ENCODE measurements at regions of chr6 and their contacts with region 1.

Region 1: GRCh38 chr6:34425498-34426410 is at the start of gene RPS10:
- DNase-seq: peak; percentile 95
- ATAC-seq: peak; percentile 95
- H3K4me3 Mint-ChIP-seq: peak within 1 kb of the TSS; percentile 97
- H3K27ac Mint-ChIP-seq: peak within 1 kb of the TSS; percentile 99
- H3K4me1 Mint-ChIP-seq: peaks cover 35% of the 10 kb centered on the region
- H3K27me3 Mint-ChIP-seq: no peaks in the 10 kb centered on the region
- total RNA-seq, gene RPS10: 2,447 to 2,541 TPM

Region 2: GRCh38 chr6:33788694-33789549 is 636.8 kb before region 1 on chr6 and contains the start of gene LEMD2:
- CTCF ChIA-PET with region 1: no interaction called
- POLR2A ChIA-PET with region 1: no interaction called
- intact Hi-C with region 1: loop called in 1 of 2 experiments (anchors 1 kb)
- DNase-seq: peak; percentile 93
- ATAC-seq: peak; percentile 87
- H3K4me3 Mint-ChIP-seq: peak within 1 kb of the TSS; percentile 96
- H3K27ac Mint-ChIP-seq: peak within 1 kb of the TSS; percentile 99
- H3K4me1 Mint-ChIP-seq: peaks cover 47% of the 10 kb centered on the region
- H3K27me3 Mint-ChIP-seq: no peaks in the 10 kb centered on the region
- total RNA-seq, gene LEMD2: 55.2 to 61.5 TPM

Region 3: GRCh38 chr6:33824461-33825154 is 601.1 kb before region 1 on chr6:
- CTCF ChIA-PET with region 1: no interaction called
- POLR2A ChIA-PET with region 1: no interaction called
- intact Hi-C with region 1: no loop called
- DNase-seq: no peak
- ATAC-seq: no peak
- H3K4me3 Mint-ChIP-seq: no peak overlapping the region
- H3K27ac Mint-ChIP-seq: no peak overlapping the region
- H3K4me1 Mint-ChIP-seq: no peaks in the 10 kb centered on the region
- H3K27me3 Mint-ChIP-seq: no peaks in the 10 kb centered on the region

Region 4: DNA sequence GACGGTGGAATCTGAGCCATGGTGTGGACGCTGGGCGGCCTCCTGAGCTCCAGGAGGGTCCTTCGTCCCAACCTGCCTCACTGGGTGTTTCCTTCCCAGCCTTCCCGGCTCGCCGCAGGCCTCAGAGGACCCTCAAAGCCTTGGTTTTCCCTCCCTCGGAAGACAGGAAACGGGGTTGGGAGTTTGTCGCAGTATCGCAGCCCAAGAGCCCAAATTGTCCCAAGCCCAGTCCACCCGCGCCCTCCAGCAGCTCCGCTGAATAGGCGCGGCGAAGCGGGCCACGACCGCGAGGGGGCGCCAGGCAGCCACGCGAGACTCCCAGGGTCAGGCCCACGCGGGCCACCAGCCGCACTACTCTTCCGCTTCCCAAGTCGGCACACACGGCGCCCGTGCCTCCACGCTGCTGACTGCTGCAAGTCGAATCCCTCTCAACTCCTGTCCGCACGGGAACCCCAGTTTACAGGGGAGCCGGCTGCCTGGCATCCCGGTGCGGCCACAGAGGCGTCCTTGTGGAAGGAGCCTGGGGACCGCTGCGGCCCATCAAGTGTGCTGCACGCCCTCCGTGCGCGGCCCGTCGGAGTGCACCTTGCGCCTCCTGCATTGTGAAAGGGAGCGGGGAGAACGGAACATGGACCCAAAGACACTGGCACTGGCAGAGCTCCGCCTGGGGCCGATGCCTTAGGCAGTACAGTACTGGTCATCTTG is 229.5 kb before region 1 on chr6:
- CTCF ChIA-PET with region 1: interaction called, 3 read pairs
- POLR2A ChIA-PET with region 1: interaction called, 3 read pairs
- intact Hi-C with region 1: loop called in 1 of 2 experiments (anchors 2 kb)
- DNase-seq: peak; percentile 93
- ATAC-seq: peak; percentile 94
- H3K4me3 Mint-ChIP-seq: peak overlapping the region; percentile 73
- H3K27ac Mint-ChIP-seq: peak overlapping the region; percentile 80
- H3K4me1 Mint-ChIP-seq: peaks cover 11% of the 10 kb centered on the region
- H3K27me3 Mint-ChIP-seq: no peaks in the 10 kb centered on the region

Region 5: DNA sequence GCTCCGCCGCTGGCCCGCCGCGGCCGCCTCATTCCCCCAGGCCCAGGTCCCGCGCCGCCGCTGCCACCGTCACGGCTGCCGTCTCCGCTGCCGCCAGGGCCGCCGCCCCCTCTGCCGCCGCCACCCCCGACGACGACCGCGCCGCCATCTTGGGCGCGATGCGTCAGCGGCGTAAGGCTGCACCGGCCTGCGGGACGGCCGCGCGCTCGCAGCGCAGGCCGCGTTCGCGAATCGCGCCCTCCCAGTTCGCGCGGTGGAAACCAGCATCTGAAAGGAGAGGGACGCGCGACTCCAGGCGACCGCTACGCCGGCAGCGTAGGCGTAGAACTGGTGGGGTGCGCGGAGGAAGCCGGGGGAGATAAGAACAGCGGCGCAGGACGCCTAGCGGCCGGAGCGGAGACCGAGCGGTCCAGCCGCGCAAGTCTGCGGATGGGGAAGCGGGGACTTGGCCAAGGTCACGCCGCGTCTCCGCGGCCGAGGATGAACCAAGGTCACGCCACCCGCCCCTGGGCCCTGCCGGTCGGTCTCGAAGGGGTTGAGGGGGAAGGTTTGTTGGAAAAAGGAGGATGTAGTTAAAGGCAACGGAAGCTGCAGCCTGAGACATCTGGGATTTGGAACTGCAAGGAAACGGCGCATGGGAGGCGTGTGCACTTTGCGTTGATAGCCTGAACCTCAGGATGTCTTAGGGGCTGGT is 33.1 kb before region 1 on chr6 and contains the start of gene NUDT3:
- CTCF ChIA-PET with region 1: no interaction called
- POLR2A ChIA-PET with region 1: no interaction called
- intact Hi-C with region 1: loop called (anchors 1 to 2 kb)
- DNase-seq: peak; percentile 96
- ATAC-seq: peak; percentile 92
- H3K4me3 Mint-ChIP-seq: no peak within 1 kb of the TSS
- H3K27ac Mint-ChIP-seq: peak within 1 kb of the TSS; percentile 95
- H3K4me1 Mint-ChIP-seq: peaks cover 21% of the 10 kb centered on the region
- H3K27me3 Mint-ChIP-seq: no peaks in the 10 kb centered on the region
- total RNA-seq, gene NUDT3: 13.3 to 13.6 TPM

Region 6: DNA sequence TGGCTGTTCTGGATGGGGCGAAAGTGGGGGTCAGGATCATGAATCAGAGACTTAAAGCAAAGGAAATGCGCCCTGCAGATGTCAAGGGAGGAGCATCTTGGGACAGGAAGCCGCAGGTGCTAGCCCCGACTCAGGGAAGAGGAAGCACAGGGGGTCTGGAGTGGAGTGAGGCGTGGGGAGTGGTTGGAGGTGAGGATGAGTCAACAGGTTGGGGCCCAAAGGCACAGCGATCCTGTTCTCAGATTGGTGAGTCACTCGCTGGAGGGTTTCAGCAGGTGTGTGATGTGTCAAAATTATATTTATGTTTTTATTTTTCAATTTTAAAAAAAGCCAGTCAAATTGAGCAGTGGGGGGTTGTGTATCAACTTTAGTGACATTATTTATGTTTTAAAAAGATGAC is 59.1 kb after region 1 on chr6:
- CTCF ChIA-PET with region 1: no interaction called
- POLR2A ChIA-PET with region 1: interaction called, 3 read pairs
- intact Hi-C with region 1: loop called in 1 of 2 experiments (anchors 2 kb)
- DNase-seq: peak; percentile 90
- ATAC-seq: peak; percentile 98
- H3K4me3 Mint-ChIP-seq: peak overlapping the region; percentile 24
- H3K27ac Mint-ChIP-seq: peak overlapping the region; percentile 87
- H3K4me1 Mint-ChIP-seq: peaks cover 27% of the 10 kb centered on the region
- H3K27me3 Mint-ChIP-seq: no peaks in the 10 kb centered on the region

Region 7: DNA sequence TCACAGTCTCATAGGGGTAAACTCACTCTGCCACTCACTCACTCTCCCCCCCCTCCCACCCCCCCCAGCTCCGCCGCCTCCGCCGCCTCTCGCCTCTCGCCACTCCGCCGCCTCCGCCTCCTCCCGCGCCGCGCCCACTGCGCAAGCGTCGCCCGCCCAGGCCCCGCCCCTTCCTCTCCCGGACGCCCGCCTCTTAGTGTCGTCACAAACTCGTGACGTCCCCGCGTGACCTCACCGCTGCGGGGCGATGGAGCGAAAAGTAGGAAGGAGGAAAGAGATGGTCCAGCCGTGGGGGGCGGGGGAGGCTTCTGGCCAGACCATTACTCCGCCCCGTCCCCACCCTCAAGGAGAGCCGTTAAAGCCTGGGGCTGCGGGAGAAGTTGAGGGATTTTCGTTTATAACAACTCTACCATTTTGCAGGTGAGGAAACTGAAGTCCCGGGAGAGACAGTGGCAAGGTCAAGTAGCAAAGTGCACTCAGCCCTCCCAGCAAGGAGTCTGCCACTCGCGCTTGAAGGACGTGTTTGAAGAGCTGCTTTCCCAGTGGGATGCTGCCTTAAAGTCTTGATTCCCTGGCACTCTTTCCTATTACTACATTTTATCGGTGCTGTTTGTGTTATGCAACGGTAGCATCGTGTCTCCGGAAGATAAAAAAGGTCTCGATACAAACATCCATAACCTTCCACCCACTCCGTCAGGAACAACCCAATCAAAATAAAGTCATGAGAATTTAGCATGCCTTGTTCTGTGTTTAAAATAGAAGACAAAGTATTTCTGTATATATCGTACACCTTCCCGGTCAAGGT is 271.2 kb after region 1 on chr6 and contains the start of gene ILRUN:
- CTCF ChIA-PET with region 1: no interaction called
- POLR2A ChIA-PET with region 1: no interaction called
- intact Hi-C with region 1: loop called in 1 of 2 experiments (anchors 1 kb)
- DNase-seq: peak; percentile 98
- ATAC-seq: peak; percentile 84
- H3K4me3 Mint-ChIP-seq: peak within 1 kb of the TSS; percentile 92
- H3K27ac Mint-ChIP-seq: peak within 1 kb of the TSS; percentile 99
- H3K4me1 Mint-ChIP-seq: peaks cover 45% of the 10 kb centered on the region
- H3K27me3 Mint-ChIP-seq: no peaks in the 10 kb centered on the region
- total RNA-seq, gene ILRUN: 56.2 to 66.9 TPM